HepG2 (cell line): ENCODE measurements at regions of chr3 and their contacts with region 1.

Region 1: DNA sequence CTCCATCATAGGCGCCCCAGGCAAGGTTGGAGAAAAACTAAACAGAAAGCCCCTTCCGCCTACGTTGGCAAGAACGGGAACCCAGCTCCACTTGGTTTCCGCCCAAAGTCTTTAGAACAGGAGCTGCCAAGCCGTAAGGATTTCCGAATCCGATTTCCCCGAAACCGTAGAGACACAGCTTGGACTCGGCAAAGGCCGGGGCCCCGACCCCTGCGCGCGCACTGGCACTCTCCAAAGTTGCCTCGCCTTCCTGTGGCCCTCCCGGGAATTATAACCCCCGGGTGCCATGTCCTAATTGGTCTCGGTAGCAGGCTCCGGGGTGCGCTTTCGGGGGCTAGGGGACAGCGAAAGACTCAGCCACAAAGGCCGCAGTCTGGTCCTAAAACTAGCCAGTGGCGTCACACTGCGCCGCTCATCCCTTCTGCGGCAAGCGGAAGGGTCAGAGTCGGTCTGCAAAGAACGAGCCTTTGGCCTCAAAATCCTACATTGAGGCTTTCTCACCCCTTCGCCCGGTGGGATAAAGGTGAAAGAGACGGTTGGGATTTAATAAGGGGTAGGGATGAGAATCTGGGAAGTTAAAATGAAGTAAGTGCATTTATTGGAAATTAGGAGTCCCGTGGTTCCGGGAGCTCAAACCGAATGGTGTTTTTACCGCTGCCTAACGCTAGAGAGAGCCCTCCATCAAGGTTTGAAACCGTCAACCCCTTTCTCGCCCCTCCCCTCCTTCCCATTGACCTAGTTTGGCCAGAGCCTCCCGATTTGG is 6.8 kb downstream of the BCL6 start:
- DNase-seq: peak; percentile 72
- ATAC-seq: peak; percentile 33
- H3K4me3 ChIP-seq: peak overlapping the region; percentile 45 to 99 (median 98)
- H3K27ac ChIP-seq: peak overlapping the region; percentile 100
- H3K4me1 ChIP-seq: peaks cover 57% of the 10 kb centered on the region
- H3K27me3 ChIP-seq: no peaks in the 10 kb centered on the region
- CTCF ChIP-seq: peak; percentile 72
- EP300 ChIP-seq: no peak
- POLR2A ChIP-seq: no peak
- RAD21 ChIP-seq: peak; percentile 70

Region 2: DNA sequence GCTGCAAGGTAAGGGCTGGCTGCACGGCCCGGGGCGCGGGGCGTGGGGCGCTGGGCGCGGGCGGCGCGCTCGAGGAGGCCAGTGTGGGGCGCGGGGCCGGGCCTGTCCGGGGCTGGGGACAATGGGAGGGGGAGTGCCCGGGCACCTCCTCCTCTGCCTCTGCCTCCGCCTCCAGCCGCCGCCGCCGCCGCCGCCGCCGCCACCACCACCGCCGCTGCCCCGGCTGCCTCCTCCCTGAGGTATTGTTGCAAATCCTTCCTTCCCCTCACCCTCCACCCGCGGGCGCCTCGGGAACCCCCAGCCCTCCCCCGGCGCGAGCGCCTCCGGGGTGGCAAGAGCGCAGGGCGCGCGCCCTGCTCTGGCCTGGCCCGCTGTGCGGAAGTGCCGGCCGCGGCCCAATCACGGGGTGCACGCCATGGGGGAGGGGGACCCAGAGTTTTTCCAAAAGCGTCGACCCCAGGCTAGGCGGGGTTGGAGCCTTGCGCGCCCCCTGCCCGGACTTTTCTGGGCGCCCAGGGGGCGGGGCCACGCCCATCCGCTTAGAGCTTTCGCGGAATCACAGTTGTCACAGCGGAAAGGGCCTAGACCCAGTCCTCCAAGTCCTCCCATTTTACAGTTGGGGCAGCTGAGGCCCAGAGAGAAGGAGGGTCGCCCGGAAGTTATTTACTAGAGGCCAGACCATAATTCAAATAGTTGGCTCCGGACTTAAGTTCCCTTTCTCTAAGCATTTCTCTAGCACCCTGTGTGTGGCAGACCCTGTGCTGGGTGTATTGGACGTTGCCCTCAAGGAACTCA is 415.7 kb after region 1 on chr3 and contains the start of gene LPP:
- CTCF ChIA-PET with region 1: interaction called, 3 read pairs
- POLR2A ChIA-PET with region 1: interaction called, 11 read pairs
- in situ Hi-C with region 1: loop called (anchors 5 kb)
- intact Hi-C with region 1: no loop called
- DNase-seq: peak; percentile 47
- ATAC-seq: peak; percentile 88
- H3K4me3 ChIP-seq: peak within 1 kb of the TSS; percentile 83 to 92 (median 88)
- H3K27ac ChIP-seq: peak within 1 kb of the TSS; percentile 73
- H3K4me1 ChIP-seq: peaks cover 64% of the 10 kb centered on the region
- H3K27me3 ChIP-seq: no peaks in the 10 kb centered on the region
- CTCF ChIP-seq: peak; percentile 39
- EP300 ChIP-seq: peak in 1 of 2 experiments; percentile 4; a peak in 1 of 4 replicates
- POLR2A ChIP-seq: no peak; a peak in 1 of 4 replicates
- RAD21 ChIP-seq: peak; percentile 44
- total RNA-seq, gene LPP: 29.9 and 41.6 TPM in 2 replicates

Region 3: GRCh38 chr3:188220988-188221818 is 482.7 kb after region 1 on chr3:
- CTCF ChIA-PET with region 1: no interaction called
- POLR2A ChIA-PET with region 1: no interaction called
- in situ Hi-C with region 1: no loop called
- intact Hi-C with region 1: loop called (anchors 5 kb)
- DNase-seq: peak; percentile 17
- ATAC-seq: peak; percentile 34; the same call in 2 of the 3 replicates
- H3K4me3 ChIP-seq: no peak overlapping the region
- H3K27ac ChIP-seq: no peak overlapping the region
- H3K4me1 ChIP-seq: peaks cover 75% of the 10 kb centered on the region
- H3K27me3 ChIP-seq: no peaks in the 10 kb centered on the region
- CTCF ChIP-seq: no peak
- EP300 ChIP-seq: 0 out of 4 replicates have a peak, but pooled peaks of 1 of the 2 experiments have one; percentile 3
- POLR2A ChIP-seq: no peak
- RAD21 ChIP-seq: no peak

Region 4: GRCh38 chr3:188385311-188385734 is 646.8 kb after region 1 on chr3:
- CTCF ChIA-PET with region 1: no interaction called
- POLR2A ChIA-PET with region 1: no interaction called
- in situ Hi-C with region 1: no loop called
- intact Hi-C with region 1: no loop called
- DNase-seq: no peak
- ATAC-seq: no peak
- H3K4me3 ChIP-seq: no peak overlapping the region
- H3K27ac ChIP-seq: no peak overlapping the region
- H3K4me1 ChIP-seq: peaks cover 39% of the 10 kb centered on the region
- H3K27me3 ChIP-seq: no peaks in the 10 kb centered on the region
- CTCF ChIP-seq: no peak
- EP300 ChIP-seq: no peak
- POLR2A ChIP-seq: no peak
- RAD21 ChIP-seq: no peak

Region 5: DNA sequence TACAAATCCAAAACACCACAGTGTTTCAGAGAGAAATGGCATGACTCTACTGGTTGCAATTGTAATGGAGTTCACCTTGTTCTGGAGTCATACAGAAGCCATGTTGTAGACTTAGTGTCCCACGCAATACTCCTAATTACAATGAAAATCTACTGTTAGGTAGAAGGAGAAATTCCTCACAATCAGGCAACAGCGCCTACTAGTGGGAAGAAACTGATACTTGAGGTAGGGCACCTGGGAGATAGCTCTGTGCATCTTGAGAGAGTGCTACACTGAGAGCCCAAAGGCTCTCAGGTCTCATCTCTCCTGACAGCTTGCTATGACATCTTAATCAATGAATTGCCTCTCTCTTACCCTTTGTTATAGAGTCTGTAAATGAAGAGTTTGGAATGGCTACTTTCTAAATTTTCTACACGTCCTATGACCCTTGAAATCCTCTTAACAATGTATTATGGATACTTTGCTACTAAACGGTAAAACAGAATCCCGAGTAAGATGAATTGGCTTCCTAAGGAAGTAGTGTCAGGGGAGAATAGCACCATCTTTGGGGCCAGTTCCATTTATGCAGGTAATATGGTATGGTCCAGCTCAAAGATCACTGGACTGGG is 1010.6 kb after region 1 on chr3:
- CTCF ChIA-PET with region 1: no interaction called
- POLR2A ChIA-PET with region 1: interaction called, 6 read pairs
- in situ Hi-C with region 1: loop called (anchors 25 kb)
- intact Hi-C with region 1: loop called (anchors 1 kb)
- DNase-seq: no peak
- ATAC-seq: no peak
- H3K4me3 ChIP-seq: no peak overlapping the region
- H3K27ac ChIP-seq: peak overlapping the region; percentile 99
- H3K4me1 ChIP-seq: peaks cover 61% of the 10 kb centered on the region
- H3K27me3 ChIP-seq: no peaks in the 10 kb centered on the region
- CTCF ChIP-seq: no peak
- EP300 ChIP-seq: no peak
- POLR2A ChIP-seq: no peak
- RAD21 ChIP-seq: no peak

Region 6: GRCh38 chr3:188954590-188955208 is 1216.2 kb after region 1 on chr3:
- CTCF ChIA-PET with region 1: interaction called, 16 read pairs
- POLR2A ChIA-PET with region 1: interaction called, 8 read pairs
- in situ Hi-C with region 1: loop called (anchors 5 kb)
- intact Hi-C with region 1: loop called (anchors 1 kb)
- DNase-seq: peak; percentile 68
- ATAC-seq: peak; percentile 92
- H3K4me3 ChIP-seq: no peak overlapping the region
- H3K27ac ChIP-seq: no peak overlapping the region
- H3K4me1 ChIP-seq: peaks cover 32% of the 10 kb centered on the region
- H3K27me3 ChIP-seq: no peaks in the 10 kb centered on the region
- CTCF ChIP-seq: peak; percentile 97
- EP300 ChIP-seq: no peak; a peak in 1 of 4 replicates
- POLR2A ChIP-seq: no peak
- RAD21 ChIP-seq: peak; percentile 94

Region 7: DNA sequence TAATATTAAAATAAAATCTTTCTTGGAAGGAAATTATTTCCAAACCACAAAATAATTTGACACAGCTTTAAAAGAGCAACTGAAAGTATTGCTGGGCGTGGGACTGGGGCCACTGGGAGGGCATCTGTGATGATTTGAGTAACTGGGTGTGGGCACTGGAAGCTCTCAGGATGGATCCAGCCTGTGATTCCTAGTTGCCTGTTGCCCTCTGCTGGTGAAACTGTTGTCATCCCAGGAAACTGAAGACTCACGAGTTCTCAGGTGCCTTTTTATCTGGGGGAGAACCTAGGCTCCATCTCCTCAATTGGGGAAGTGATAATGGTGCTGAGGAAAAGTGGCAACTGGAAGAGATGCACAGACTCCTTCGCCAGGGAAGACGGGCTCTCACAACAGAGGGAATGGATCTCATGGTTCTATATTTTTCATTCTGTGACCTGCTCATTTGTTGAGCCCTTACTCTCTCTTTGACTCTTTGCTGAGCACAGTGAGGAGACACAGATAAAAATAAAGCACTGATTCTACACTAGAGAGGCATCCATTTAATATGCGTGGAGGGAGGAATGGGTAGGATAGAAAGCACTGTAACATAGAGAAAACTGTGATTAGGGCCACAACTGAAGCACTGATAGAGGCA is 1494.8 kb after region 1 on chr3:
- CTCF ChIA-PET with region 1: no interaction called
- POLR2A ChIA-PET with region 1: no interaction called
- in situ Hi-C with region 1: no loop called
- intact Hi-C with region 1: loop called (anchors 2 kb)
- DNase-seq: peak; percentile 39
- ATAC-seq: peak; percentile 91
- H3K4me3 ChIP-seq: no peak overlapping the region
- H3K27ac ChIP-seq: no peak overlapping the region
- H3K4me1 ChIP-seq: no peaks in the 10 kb centered on the region
- H3K27me3 ChIP-seq: no peaks in the 10 kb centered on the region
- CTCF ChIP-seq: peak; percentile 80
- EP300 ChIP-seq: no peak
- POLR2A ChIP-seq: no peak
- RAD21 ChIP-seq: no peak